ENCODE measurements at regions of chr6 and their contacts with region 1.

Region 1: DNA sequence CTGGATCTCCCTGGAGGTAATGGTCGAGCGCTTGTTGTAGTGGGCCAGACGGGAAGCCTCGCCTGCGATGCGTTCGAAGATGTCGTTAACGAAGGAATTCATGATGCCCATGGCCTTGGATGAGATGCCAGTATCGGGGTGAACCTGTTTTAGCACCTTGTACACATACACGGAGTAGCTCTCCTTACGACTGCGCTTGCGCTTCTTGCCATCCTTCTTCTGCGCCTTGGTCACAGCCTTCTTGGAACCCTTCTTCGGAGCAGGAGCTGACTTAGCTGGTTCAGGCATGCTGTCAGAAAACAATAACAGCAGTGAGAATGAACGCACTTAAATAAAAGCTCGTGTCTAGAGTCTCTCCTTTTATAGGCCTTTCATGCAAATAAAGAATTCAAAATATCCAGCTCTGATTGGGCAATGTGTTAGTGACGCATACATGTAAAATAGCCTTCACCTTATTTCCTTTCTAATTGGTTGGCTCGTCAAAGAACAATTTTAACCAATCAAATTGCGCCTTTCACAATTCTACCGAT is 129.2 kb downstream of the HFE start:
- DNase-seq: peak; percentile 92
- H3K4me3 Mint-ChIP-seq: no peak overlapping the region
- H3K27ac Mint-ChIP-seq: no peak overlapping the region
- H3K4me1 Mint-ChIP-seq: peaks cover 39% of the 10 kb centered on the region
- H3K27me3 Mint-ChIP-seq: no peaks in the 10 kb centered on the region

Region 2: GRCh38 chr6:26045065-26045927 is 171.1 kb before region 1 on chr6:
- CTCF ChIA-PET with region 1: no interaction called
- POLR2A ChIA-PET with region 1: interaction called, 28 read pairs
- DNase-seq: peak; percentile 93
- H3K4me3 Mint-ChIP-seq: peak overlapping the region; percentile 83
- H3K27ac Mint-ChIP-seq: peak overlapping the region; percentile 99
- H3K4me1 Mint-ChIP-seq: peaks cover 44% of the 10 kb centered on the region
- H3K27me3 Mint-ChIP-seq: no peaks in the 10 kb centered on the region

Region 3: GRCh38 chr6:26183581-26184366 is 32.6 kb before region 1 on chr6:
- CTCF ChIA-PET with region 1: interaction called, 7 read pairs
- POLR2A ChIA-PET with region 1: interaction called, 39 read pairs
- DNase-seq: peak; percentile 75
- H3K4me3 Mint-ChIP-seq: peak overlapping the region; percentile 91
- H3K27ac Mint-ChIP-seq: peak overlapping the region; percentile 99
- H3K4me1 Mint-ChIP-seq: peaks cover 73% of the 10 kb centered on the region
- H3K27me3 Mint-ChIP-seq: no peaks in the 10 kb centered on the region

Region 4: DNA sequence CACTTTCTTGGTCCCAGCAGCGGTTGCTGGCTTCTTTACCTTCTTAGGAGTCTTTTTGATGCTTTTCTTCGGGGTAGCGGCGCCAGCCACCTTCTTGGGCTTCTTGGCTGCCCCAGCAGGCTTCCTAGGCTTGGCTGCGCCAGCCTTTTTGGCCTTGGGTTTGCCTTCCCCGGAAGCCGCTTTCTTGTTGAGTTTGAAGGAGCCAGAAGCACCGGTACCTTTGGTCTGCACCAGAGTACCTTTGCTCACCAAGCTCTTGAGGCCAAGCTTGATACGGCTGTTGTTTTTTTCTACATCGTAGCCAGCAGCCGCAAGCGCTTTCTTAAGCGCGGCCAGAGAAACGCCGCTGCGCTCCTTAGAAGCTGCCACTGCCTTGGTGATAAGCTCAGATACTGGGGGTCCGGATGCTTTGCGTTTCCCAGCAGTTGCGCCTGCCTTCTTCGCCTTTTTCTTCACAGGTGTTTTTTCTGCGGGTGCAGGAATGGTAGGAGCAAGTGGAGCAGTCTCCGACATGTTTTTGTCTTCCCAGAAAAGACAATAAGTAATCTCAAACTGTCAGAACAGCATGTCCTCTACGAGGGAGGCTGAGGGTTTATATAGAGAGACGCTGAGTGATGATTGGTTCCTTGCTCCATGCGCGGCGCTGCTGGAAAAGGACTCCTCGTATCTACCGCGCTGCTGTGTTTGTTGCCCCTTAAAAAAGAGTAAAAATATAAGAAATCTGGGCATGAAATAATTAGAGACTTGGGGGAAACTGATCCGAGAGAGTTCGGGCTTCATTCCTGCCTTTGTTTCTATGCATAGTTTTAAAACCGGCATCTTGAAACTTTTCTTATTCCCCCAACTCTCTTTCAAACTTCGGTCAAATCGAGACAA is 18.2 kb after region 1 on chr6:
- CTCF ChIA-PET with region 1: interaction called, 6 read pairs
- POLR2A ChIA-PET with region 1: interaction called, 142 read pairs
- DNase-seq: peak; percentile 86
- H3K4me3 Mint-ChIP-seq: peak overlapping the region; percentile 85
- H3K27ac Mint-ChIP-seq: peak overlapping the region; percentile 100
- H3K4me1 Mint-ChIP-seq: peaks cover 54% of the 10 kb centered on the region
- H3K27me3 Mint-ChIP-seq: no peaks in the 10 kb centered on the region

Region 5: DNA sequence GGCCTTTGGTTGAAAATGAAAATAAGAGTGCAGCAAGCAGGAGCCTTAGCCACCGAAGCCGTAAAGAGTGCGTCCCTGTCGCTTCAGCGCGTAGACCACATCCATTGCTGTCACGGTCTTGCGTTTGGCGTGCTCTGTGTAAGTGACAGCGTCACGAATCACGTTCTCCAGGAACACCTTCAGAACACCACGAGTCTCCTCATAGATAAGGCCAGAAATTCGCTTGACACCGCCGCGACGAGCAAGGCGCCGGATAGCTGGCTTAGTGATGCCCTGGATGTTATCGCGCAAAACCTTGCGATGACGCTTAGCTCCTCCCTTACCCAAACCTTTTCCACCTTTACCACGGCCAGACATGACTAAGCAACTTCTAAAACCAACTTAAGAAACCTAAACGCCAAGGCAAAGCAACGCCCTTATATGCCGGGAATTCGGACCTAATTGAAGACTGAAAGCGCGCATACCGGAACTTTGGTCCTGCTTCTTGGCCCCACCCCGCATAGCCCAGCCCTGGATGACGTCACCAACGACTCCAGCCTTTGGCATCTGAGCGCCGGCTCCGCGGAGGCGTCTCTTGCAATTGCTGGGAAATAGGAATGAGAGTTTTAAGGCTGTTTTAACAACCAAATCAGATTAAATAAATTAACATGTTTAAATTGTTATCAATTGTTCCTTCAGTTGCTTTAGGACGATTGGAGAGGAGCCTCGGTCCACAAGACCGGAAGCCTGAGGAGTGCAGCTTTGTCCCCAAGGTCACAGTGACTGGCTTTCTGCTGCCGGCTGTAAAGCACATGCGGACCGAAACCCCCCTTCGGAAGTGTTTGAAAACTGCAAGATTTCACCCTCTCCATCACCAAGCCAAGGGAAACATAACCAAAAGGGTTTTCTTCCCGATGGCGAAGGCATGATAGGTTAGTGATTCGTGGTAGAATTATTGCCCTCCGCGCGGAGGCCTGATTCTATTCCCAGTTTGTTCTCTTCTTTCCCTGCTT is 69.0 kb after region 1 on chr6:
- CTCF ChIA-PET with region 1: no interaction called
- POLR2A ChIA-PET with region 1: interaction called, 10 read pairs
- DNase-seq: peak; percentile 99
- H3K4me3 Mint-ChIP-seq: peak overlapping the region; percentile 92
- H3K27ac Mint-ChIP-seq: peak overlapping the region; percentile 100
- H3K4me1 Mint-ChIP-seq: peaks cover 38% of the 10 kb centered on the region
- H3K27me3 Mint-ChIP-seq: peaks cover 2% of the 10 kb centered on the region

Measured in activated CD4-positive, alpha-beta T cell treated with anti-CD3 and anti-CD28 coated beads, Interleukin-2, amount 10 ng/mL, durations not matched to agents 7 days and 5 days (primary cell).